PC-9 (cell line): ENCODE measurements at regions of chr1 and their contacts with region 1.

Region 1: DNA sequence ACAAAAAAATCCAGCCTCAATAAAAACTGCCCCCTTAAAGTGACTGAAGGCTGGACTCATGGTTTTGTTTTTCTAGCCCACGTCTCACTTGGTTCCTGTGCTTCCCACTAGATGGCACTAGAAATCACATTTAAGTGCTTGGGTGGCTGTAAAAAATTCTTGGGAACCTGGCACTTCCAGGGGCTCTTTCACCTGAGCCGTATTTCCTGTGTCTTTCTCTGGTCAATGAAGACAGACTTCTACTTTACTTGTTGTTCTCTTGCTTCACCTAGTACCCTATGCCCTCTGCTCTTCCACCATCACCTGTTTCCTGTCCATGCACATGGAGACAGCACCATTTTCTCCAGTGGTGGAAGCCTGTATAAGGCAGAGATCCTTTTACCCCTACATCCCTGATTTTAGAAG is 20.0 kb downstream of the METTL13 start:
- DNase-seq: peak in 1 of 2 experiments; percentile 43
- H3K4me3 ChIP-seq: no peak overlapping the region
- H3K27ac ChIP-seq: no peak overlapping the region
- H3K4me1 ChIP-seq: no peaks in the 10 kb centered on the region
- H3K27me3 ChIP-seq: no peaks in the 10 kb centered on the region
- CTCF ChIP-seq: peak; percentile 82

Region 2: GRCh38 chr1:172408958-172409357 is 607.5 kb after region 1 on chr1:
- CTCF ChIA-PET with region 1: no interaction called
- POLR2A ChIA-PET with region 1: no interaction called
- intact Hi-C with region 1: loop called (anchors 5 kb)
- DNase-seq: no peak
- H3K4me3 ChIP-seq: no peak overlapping the region
- H3K27ac ChIP-seq: no peak overlapping the region
- H3K4me1 ChIP-seq: no peaks in the 10 kb centered on the region
- H3K27me3 ChIP-seq: no peaks in the 10 kb centered on the region
- CTCF ChIP-seq: no peak